SK-N-SH (cell line): ENCODE measurements at regions of chr2 and their contacts with region 1.

Region 1: GRCh38 chr2:195659982-195660890 is 3.2 kb downstream of the SLC39A10 start:
- DNase-seq: peak; percentile 50
- H3K4me3 ChIP-seq: peak overlapping the region; percentile 92 to 94
- H3K27ac ChIP-seq: peak overlapping the region; percentile 87 to 95
- H3K4me1 ChIP-seq: peaks cover 3 to 14% of the 10 kb centered on the region in 2 experiments; a peak in 3 of 4 replicates
- H3K27me3 ChIP-seq: no peaks in the 10 kb centered on the region
- CTCF ChIP-seq: peak; percentile 95
- EP300 ChIP-seq: no peak
- RAD21 ChIP-seq: peak; percentile 82

Region 2: DNA sequence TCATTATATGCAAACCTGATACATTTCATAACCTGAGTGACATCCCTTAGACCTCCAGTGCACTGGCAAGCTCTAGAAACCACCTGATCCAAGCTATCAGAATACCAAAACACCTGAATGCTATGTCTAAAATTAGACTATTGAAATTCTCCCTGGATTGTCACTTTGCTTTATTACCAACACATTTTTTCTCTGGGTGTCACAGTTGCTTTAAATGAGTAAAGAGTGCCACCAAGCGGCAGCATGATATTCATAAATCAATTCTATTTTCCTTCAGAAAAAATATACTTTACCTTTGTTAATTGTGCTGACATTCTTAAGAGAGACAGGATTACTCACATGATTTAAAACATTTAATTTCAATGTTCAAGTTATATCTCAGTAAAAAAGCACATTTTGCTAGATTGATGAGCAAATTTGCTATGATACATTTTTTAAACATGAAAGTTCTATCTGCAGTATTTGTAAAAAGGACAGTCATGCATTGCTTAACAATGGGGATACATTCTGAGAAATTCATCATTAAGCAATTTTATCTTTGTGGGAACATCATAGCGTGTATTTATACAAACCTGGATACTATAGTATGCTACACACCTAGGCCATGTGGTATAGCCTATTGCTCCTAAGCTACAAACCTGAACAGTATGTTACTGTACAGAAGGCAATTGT is 341.7 kb before region 1 on chr2:
- CTCF ChIA-PET with region 1: interaction called, 18 read pairs
- POLR2A ChIA-PET with region 1: interaction called, 3 read pairs
- DNase-seq: peak; percentile 48
- H3K4me3 ChIP-seq: no peak overlapping the region; a peak in 1 of 4 replicates
- H3K27ac ChIP-seq: no peak overlapping the region
- H3K4me1 ChIP-seq: peaks cover 0 to 20% of the 10 kb centered on the region in 2 experiments; a peak in 2 of 4 replicates
- H3K27me3 ChIP-seq: no peaks in the 10 kb centered on the region
- CTCF ChIP-seq: peak; percentile 82
- EP300 ChIP-seq: no peak
- RAD21 ChIP-seq: peak; percentile 90

Region 3: DNA sequence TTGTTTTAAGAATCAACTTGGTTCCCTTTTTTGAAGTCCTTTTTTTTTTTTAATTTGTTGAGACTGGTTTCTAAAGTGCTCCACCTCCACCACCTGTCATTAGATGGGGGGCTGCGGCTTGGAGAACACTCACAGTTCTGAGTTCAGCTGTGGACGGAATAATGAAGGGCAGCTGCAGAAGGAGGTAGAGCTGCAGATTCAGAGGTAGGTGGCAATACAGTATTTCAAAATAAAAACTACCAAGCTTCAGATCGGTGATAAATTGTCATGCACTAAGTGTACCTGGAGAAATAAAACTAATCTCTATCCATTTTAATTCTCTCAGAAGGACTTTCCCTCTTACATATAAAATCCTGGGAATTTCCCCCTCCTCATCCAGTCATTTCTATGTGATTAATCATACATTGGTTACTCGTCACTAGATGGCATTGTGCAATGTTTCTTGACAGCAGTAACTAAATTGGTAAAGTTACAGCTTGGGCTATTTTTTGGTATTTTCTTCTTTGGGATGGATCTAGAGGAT is 84.3 kb before region 1 on chr2:
- CTCF ChIA-PET with region 1: interaction called, 37 read pairs
- POLR2A ChIA-PET with region 1: no interaction called
- DNase-seq: peak; percentile 25
- H3K4me3 ChIP-seq: no peak overlapping the region
- H3K27ac ChIP-seq: peak overlapping the region in 1 of 2 experiments; percentile 16; a peak in 3 of 4 replicates
- H3K4me1 ChIP-seq: peaks cover 3 to 4% of the 10 kb centered on the region in 2 experiments; a peak in 2 of 4 replicates
- H3K27me3 ChIP-seq: no peaks in the 10 kb centered on the region
- CTCF ChIP-seq: peak; percentile 43
- EP300 ChIP-seq: 0 out of 4 replicates have a peak, but pooled peaks of 1 of the 2 experiments have one; percentile 10
- RAD21 ChIP-seq: peak; percentile 52

Region 4: GRCh38 chr2:195649629-195650190 is 10.5 kb before region 1 on chr2:
- CTCF ChIA-PET with region 1: interaction called, 10 read pairs
- POLR2A ChIA-PET with region 1: interaction called, 4 read pairs
- DNase-seq: no peak
- H3K4me3 ChIP-seq: no peak overlapping the region
- H3K27ac ChIP-seq: no peak overlapping the region
- H3K4me1 ChIP-seq: no peaks in the 10 kb centered on the region
- H3K27me3 ChIP-seq: no peaks in the 10 kb centered on the region
- CTCF ChIP-seq: no peak
- EP300 ChIP-seq: no peak
- RAD21 ChIP-seq: no peak

Region 5: DNA sequence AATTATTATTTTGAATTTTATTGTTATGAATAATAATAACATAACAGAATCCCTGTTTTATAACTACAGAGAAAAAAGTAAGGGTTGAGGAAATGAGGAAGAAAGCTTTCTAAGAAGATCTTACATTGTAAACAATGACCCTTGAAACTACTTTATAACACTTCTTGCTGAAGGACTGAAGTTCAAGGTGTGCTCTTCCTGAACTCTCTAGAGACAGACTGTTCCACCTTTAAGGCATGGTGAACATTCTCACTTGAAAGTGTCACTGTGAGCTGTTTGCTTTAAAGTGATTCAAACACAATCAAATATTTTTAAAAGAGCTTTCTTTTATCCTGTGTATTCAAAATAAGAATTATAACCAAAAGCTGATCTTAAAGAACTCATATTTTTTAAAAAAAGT is 276.9 kb after region 1 on chr2:
- CTCF ChIA-PET with region 1: interaction called, 14 read pairs
- POLR2A ChIA-PET with region 1: no interaction called
- DNase-seq: no peak
- H3K4me3 ChIP-seq: no peak overlapping the region
- H3K27ac ChIP-seq: no peak overlapping the region
- H3K4me1 ChIP-seq: no peaks in the 10 kb centered on the region; a peak in 1 of 4 replicates
- H3K27me3 ChIP-seq: no peaks in the 10 kb centered on the region
- CTCF ChIP-seq: no peak
- EP300 ChIP-seq: no peak
- RAD21 ChIP-seq: no peak